ENCODE measurements at regions of chr2 and their contacts with region 1.

Region 1: GRCh38 chr2:166516712-166517303 is 22.8 kb upstream of the SCN7A start:
- DNase-seq: peak in 1 of 2 donors; percentile 41
- ATAC-seq: peak in 3 of 8 donors; percentile 35 to 69 (median 46)
- H3K4me3 ChIP-seq: no peak overlapping the region
- H3K27ac ChIP-seq: no peak overlapping the region
- H3K4me1 ChIP-seq: peaks cover 0 to 10% (median 0%) of the 10 kb centered on the region in 9 donors
- H3K27me3 ChIP-seq: no peaks in the 10 kb centered on the region
- CTCF ChIP-seq: peak; percentile 32 to 76 (median 61)

Region 2: DNA sequence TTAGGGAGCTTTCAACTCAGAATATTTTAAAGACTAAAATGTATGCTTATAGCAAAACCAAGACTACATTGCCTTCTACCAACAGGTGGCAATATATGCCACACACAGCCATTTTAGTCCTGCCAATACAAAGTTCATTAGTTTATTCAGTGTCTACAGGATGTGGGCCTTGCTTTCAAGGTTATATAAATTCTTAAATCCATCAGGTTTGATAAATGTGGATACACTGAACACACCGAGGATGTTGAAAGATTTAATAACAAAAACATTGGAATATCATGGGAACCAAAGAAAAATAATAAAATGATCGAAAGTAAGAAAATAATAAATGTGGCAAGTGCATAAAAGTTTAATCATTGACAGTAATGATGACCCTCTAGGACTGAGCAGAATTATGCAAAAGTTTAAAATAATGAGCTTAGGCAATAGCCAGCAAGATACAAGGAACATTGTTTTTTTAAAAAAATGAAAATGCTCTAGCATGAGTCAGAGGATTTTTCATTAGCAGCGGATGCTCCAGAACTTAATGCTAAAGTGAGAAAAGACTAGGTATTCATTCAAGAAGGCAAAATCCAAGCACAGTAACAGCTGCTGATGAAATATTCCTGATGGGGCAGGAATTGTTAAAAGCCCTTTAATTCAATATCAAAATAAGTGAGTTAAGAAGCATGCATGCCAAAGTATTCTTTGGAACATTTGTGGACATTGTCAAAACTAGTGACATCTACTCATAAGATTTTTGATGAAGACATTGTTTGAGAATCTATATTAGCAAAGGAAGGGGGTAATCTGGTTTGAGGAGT is 155.3 kb before region 1 on chr2:
- intact Hi-C with region 1: loop called in 3 of 10 experiments (anchors 5 to 10 kb)
- DNase-seq: no peak
- ATAC-seq: no peak
- H3K4me3 ChIP-seq: no peak overlapping the region
- H3K27ac ChIP-seq: no peak overlapping the region
- H3K4me1 ChIP-seq: no peaks in the 10 kb centered on the region
- H3K27me3 ChIP-seq: no peaks in the 10 kb centered on the region
- CTCF ChIP-seq: peak in 8 of 9 donors; percentile 15 to 57 (median 40)

Region 3: DNA sequence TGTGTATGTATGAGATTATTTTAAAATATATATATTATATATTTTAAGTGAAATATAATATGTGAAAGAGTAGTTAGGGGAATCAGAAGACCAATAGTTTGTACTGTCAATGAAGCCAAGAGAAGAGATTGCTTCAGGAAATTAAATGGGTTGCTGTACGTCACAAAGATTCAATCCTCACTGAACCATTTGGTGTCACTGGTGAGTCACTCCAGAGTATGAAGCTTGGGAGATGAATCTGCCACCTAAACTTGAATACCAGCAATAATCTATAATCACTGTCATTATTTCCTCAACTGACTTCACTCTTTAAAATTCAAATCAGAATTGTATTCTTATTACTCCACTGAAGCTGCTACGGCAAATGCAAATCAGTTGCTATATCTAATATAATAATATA is 99.1 kb before region 1 on chr2:
- intact Hi-C with region 1: loop called in 4 of 10 experiments (anchors 5 to 10 kb)
- DNase-seq: no peak
- ATAC-seq: peak in 1 of 8 donors; percentile 52
- H3K4me3 ChIP-seq: no peak overlapping the region
- H3K27ac ChIP-seq: no peak overlapping the region
- H3K4me1 ChIP-seq: no peaks in the 10 kb centered on the region
- H3K27me3 ChIP-seq: no peaks in the 10 kb centered on the region
- CTCF ChIP-seq: peak in 3 of 9 donors; percentile 12 to 46 (median 39)

Region 4: DNA sequence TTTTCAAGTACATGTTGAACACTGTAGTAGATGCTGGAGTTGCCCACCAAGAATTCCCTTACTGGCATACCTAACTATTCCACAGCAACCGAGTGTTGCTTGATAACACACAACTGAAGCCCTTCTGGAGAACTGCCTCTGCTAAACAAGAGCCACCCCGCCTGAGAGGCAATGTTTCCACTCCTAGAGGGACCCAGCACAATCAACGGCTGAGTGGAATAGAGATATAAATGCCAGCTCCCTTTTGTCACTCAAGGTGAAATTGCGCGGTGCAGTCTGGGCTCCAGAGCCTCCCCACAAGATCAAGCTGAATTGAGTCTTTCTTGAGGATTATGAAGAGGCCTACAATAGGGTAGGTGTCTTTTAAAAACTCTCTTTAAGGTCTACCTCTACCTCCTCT is 92.0 kb before region 1 on chr2:
- intact Hi-C with region 1: loop called in 3 of 10 experiments (anchors 5 to 10 kb)
- DNase-seq: no peak
- ATAC-seq: peak in 1 of 8 donors; percentile 12
- H3K4me3 ChIP-seq: no peak overlapping the region
- H3K27ac ChIP-seq: no peak overlapping the region
- H3K4me1 ChIP-seq: no peaks in the 10 kb centered on the region
- H3K27me3 ChIP-seq: no peaks in the 10 kb centered on the region
- CTCF ChIP-seq: no peak